ENCODE measurements at regions of chr22 and their contacts with region 1.

Region 1: DNA sequence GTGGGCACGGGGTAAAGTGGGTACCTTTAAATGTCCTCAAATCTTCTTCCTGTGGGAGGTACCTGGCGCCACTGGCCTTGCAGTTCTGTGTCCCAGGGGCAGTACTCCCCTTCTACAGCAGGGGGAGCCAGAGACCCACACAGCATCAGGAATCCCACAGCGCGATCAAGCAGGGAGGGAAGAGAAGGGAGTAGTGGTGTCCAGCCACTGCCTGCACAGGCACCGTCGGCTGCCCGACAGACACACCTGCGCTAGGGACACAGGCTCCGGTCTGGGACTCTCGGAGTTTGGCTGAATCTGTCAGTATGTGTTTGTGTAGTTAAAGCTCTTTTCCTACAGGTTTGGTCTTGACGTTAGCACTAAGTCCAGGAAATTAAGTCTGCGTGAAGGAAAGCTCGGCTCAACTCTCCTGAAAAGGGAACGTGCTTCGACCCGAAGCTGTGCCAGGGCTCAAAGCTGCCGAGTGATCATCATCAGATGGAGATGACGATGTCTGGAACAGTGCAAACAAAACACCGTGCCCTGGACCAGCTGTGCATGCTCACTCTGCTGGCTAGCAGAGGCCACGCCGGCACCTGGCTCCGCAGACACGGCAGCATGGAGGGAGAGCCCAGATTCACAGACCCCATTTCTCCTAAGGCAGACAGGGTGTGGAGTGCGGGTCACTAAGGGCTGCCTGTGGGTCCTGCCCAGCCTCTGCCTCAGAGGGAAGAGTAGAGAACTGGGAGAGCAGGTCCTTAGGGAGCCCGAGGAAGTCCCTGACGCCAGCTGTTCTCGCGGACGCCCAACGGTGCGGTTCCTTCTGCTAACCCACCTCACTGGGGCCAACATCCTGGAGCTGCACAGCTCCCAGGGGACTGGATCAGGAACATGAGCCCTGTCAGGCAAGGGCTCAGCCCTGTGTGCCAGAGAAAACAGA is 56.0 kb upstream of the BID start:
- DNase-seq: peak; percentile 74 to 95 (median 89)

Region 2: DNA sequence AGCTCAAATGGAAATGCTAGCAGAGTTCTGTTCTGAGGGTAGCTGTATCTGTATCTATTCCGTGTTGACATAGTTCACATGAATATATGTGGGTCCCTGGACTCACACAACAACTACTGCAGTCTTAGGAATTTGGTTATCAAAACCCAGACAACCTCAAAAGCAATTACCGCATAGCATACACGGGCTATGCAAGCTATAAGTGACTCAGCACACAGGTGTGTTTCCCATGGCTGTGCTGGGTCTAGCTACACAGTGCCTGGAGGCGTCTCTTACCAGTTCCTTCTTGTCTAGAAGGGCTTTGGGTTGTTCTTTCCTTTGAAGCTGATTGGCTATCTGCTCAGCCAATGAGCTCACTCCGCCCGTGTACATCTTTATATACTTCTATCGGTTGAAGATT is 42.2 kb after region 1 on chr22:
- intact Hi-C with region 1: loop called (anchors 5 kb)
- DNase-seq: peak in 1 of 42 donors; percentile 47

Region 3: DNA sequence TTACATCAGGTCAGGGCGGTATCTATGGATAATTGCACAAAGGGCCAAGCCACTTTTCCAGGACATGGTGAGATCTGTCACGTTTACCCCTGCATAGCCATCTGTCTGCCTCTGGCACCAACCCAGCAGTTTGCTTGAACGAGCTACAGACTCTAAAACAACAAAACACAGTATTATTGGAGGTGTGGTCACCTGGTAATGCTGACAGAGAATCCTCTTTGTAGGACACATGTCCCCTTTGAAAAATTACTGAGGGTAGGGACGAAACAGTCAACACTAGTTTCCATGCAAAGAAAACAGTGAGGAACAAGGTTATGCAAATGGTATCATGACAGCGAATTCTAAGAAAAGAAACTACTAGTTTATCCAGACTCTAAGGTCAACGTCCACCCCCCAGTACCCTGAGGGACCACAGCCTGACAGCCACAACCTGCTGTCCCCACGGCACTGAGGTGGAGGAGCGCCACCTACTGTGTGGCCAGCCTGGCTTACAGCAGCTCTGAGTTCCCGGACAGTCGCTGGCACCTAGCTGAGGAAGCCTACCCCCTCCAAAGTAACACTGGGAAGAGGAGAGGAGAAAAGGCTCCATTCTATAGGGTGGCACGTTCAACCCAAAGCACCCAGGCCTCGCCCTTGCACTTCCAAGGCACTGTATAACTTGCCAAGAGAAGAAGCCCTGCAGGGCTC is 61.3 kb after region 1 on chr22:
- intact Hi-C with region 1: loop called (anchors 5 kb)
- DNase-seq: peak in 40 of 42 donors; percentile 50 to 89 (median 70)

Region 4: DNA sequence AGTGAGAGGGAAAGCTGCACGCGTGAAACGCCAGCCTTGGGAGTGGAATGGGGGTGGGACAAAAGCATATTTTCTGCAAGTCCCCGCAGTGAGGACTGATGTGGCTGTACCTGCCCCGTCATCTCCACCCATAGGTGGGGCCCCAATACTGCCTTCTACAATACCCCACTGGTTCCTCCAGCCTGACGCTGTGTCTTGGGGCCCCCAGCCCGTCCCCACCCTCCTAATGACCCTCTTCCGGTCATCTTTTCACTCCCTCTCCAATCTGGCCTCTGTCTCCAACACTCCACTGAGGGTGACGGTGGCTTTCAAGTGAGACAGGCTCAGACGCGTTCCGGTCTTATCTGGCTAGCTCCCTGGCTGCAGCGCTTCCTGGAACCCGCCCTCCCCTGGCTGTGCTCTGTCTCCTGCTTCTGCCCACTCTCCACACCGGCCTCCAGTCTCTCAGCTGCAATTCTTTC is 89.9 kb after region 1 on chr22:
- intact Hi-C with region 1: no loop called
- DNase-seq: peak in 3 of 42 donors; percentile 6 to 29 (median 12)

Region 5: GRCh38 chr22:18024276-18024947 is 194.1 kb after region 1 on chr22 and contains the start of gene MICAL3:
- intact Hi-C with region 1: loop called (anchors 2 kb)
- DNase-seq: peak; percentile 24 to 90 (median 81)

Region 6: DNA sequence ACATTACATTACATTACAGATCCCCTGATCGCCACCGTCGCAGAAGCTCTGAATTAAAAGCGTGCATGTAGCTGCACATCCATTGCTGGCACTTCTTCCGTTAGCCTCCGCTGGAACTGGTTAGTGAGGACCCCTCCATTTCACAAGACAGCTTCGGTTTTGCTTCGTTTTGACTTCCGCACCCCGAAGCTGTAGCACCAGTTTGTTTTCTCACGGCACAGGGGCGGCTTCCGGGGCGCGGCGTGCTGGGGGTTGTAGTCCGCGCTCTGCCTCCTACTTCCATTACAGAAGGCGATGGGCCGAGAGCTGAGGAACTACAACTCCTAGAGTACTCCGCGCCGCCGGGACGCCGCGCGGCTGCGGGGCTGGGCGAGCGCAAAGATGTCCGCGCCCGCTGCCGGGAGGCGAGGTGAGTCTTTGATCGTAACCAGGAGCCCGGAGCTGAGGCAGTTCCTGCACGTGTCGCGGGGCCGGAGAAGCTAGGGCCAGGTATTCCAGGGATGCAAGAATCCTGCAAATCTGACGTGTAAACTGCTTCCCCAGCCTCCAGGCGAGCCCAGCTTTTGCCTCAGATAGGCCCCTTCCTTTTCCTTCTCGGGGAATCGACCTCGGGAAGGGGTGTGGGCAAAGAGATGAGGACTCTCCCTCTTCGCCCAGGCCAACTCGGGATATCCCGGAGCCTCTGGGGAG is 247.5 kb after region 1 on chr22 and contains the start of gene PEX26:
- intact Hi-C with region 1: loop called (anchors 2 kb)
- DNase-seq: peak; percentile 93 to 99 (median 97)

Measured in head of caudate nucleus (tissue), 42 donors.